Right ventricle myocardium inferior (tissue), 1 donor: ENCODE measurements at regions of chr1 and their contacts with region 1.

Region 1: DNA sequence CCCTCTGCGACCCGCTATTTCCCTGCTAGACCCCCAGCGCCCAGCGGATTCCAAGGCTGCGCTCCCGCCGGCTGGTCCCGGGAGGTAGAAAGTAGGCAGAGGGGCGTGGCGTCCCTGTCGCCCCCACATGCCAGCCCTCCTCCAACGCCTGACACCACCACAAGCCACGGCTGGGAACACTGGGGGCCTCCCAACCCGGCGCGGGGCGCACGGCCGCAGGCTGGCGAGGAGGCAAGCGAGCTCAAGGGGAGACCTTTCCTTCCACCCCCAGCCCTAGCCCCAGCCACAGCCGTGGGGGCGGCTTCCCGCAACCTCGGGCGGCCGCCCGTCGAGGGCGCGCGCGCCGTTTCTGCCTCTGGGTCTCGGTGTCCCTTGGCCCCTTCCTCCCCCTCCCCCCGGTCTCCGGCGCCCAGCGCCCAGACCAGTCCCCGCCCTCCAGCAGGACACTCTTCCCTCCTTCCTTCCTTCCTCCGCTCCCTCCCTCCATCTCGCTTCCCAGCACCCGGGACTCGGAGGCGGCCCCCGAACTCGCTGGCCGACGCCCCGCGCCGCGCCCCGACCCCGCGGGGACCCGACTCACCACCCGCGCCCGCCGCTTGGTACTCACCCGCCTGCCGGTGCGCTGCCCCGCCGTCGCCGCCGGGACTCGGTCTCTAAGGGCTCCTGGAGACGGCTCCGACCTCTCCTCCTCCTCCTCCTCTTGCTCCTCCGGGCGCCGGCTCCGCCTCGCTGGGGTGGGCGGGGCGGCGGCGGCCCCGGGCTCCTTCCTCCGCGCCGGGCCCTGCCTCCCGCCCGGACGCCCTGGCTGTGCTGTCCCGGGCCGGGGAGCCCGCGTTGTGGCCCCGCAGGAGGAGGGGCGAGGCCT is at the start of gene GNG12:
- DNase-seq: peak; percentile 78
- ATAC-seq: peak; percentile 90
- total RNA-seq, gene GNG12: 37.2 TPM

Region 2: GRCh38 chr1:67535474-67535873 is 297.5 kb before region 1 on chr1:
- intact Hi-C with region 1: loop called (anchors 5 kb)
- DNase-seq: peak; percentile 74
- ATAC-seq: peak; percentile 69

Region 3: DNA sequence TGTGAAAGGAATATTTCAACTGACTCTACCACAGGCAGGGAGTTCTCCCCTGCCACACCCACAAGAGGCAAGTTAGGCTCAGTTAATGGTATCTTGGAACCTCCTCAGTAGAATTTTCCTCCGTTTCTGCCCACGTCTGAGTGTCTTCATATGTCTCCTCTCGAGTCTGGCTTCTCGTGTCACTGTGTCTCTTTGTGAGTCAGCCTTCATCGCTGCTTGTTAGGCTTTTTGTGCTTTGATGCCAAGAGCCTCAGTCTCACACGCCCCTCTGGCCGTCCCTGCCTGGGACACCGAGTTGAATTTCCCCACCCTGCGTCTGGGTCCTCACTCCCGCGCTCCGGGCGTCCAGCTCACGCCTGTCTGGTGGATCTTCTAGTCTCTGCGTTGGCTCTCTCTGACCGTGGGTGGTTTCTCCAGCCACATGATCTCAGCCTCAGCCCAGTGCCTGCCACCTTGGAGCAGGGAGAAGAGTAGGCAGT is 273.7 kb before region 1 on chr1:
- intact Hi-C with region 1: no loop called
- DNase-seq: peak; percentile 71
- ATAC-seq: peak; percentile 64

Region 4: DNA sequence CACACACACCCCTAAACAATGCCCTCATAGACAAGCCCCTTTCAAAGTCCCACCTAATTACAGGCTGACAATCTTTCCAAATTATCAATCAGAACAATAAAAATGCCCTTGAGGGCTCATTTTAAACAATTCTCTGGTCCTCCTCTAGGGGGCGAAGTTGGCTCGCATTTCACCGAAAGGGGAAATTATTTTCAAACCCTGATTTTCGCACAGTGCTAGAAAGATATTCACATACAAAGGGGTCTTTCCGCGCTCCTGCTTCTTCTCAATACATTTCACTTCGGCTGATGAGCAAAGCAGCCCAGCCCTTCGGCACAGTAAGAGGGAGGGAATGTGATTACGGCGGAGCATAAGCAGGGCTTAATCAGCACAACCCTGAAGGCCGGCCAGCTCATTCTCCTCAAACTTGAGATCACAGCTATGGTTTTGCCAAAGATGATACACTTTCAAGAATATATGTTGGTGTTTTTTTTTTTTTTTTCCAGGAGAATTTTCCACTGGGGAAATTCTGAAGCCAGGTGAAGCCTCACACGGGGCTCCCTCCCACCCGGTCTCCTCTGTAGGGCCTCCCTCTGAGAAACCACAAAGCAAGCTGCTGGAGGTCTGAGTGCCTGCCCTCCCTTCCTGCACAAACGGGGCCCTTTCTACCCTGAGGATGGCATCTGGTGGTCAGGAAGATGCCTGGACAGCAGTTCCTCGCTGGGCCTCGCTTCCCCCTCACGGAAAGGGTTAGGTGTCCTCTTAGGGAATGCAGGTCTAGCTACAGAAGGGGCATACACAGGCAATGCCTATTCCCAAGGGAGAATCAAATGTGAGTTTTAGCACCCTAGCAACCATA is 66.6 kb before region 1 on chr1:
- intact Hi-C with region 1: loop called (anchors 2 kb)
- DNase-seq: no peak
- ATAC-seq: peak; percentile 74

Region 5: GRCh38 chr1:67803380-67804279 is 29.3 kb before region 1 on chr1:
- intact Hi-C with region 1: no loop called
- DNase-seq: no peak
- ATAC-seq: peak; percentile 63

Region 6: GRCh38 chr1:68036946-68037345 is 204.0 kb after region 1 on chr1:
- intact Hi-C with region 1: no loop called
- DNase-seq: no peak
- ATAC-seq: no peak

Region 7: DNA sequence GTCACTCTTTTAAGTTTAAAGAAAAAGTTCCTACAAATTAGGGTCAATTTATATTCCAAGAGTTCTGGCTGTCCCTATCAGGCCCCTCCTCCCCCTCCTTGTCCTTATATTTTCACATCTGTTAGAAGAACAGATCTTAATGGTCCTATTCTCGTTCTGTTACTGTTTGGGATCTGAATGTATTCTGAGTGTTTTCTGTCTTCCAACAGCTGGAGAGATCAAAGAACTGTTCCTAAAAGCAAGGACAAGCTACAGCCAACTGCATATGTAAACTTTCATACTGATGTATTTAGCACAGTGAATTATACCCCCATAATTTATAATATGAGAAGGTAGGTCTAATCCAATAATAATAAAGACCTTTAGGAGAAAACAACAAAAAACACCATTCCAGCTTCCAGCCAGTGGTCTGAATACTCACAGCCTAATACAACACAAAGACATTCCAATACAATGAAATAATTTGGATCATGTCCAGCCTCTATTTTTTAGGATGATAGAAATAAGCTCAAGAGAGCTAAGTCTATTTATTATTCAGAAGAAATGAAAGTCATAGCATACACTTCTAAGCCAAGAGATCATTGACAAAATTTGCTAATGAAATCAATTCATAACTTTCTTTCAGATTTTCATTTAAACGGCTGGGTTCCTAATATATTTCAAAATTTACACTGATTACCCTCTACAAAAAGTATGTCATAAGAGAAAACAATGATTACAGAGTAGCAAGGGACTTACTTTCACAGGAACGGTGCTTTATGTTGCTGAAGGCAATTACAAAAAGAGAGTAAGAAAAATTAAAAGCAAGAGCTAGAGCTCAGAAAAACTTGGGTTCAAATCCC is 374.1 kb after region 1 on chr1:
- intact Hi-C with region 1: loop called (anchors 10 kb)
- DNase-seq: no peak
- ATAC-seq: no peak

Region 8: GRCh38 chr1:68528243-68528642 is 695.3 kb after region 1 on chr1:
- intact Hi-C with region 1: no loop called
- DNase-seq: no peak
- ATAC-seq: no peak